Common myeloid progenitor, CD34-positive (primary cell): ENCODE measurements at regions of chr7 and their contacts with region 1.

Region 1: GRCh38 chr7:3154912-3155494 is 111.3 kb upstream of the CARD11 start:
- DNase-seq: peak; percentile 67 to 85 (median 76)
- H3K4me3 ChIP-seq: no peak overlapping the region
- H3K27ac ChIP-seq: no peak overlapping the region
- H3K4me1 ChIP-seq: peaks cover 2 to 23% (median 11%) of the 10 kb centered on the region in 4 experiments
- H3K27me3 ChIP-seq: no peaks in the 10 kb centered on the region

Region 2: GRCh38 chr7:2863461-2864066 is 291.4 kb before region 1 on chr7:
- CTCF ChIA-PET with region 1: interaction called, 35 read pairs
- POLR2A ChIA-PET with region 1: no interaction called
- DNase-seq: peak; percentile 85 to 96 (median 94)
- H3K4me3 ChIP-seq: peak overlapping the region in 4 of 7 experiments; percentile 11 to 60 (median 32)
- H3K27ac ChIP-seq: no peak overlapping the region
- H3K4me1 ChIP-seq: peaks cover 3 to 30% (median 21%) of the 10 kb centered on the region in 4 experiments
- H3K27me3 ChIP-seq: no peaks in the 10 kb centered on the region

Region 3: GRCh38 chr7:2886900-2887299 is 268.1 kb before region 1 on chr7:
- CTCF ChIA-PET with region 1: interaction called, 12 read pairs
- POLR2A ChIA-PET with region 1: no interaction called
- DNase-seq: peak; percentile 81 to 82 (median 82)
- H3K4me3 ChIP-seq: no peak overlapping the region
- H3K27ac ChIP-seq: no peak overlapping the region
- H3K4me1 ChIP-seq: peaks cover 0 to 21% (median 16%) of the 10 kb centered on the region in 4 experiments
- H3K27me3 ChIP-seq: no peaks in the 10 kb centered on the region

Region 4: GRCh38 chr7:3065724-3066143 is 89.3 kb before region 1 on chr7:
- CTCF ChIA-PET with region 1: interaction called, 12 read pairs
- POLR2A ChIA-PET with region 1: no interaction called
- DNase-seq: peak; percentile 44 to 59 (median 54)
- H3K4me3 ChIP-seq: no peak overlapping the region
- H3K27ac ChIP-seq: no peak overlapping the region
- H3K4me1 ChIP-seq: peaks cover 0 to 30% (median 18%) of the 10 kb centered on the region in 4 experiments
- H3K27me3 ChIP-seq: no peaks in the 10 kb centered on the region

Region 5: DNA sequence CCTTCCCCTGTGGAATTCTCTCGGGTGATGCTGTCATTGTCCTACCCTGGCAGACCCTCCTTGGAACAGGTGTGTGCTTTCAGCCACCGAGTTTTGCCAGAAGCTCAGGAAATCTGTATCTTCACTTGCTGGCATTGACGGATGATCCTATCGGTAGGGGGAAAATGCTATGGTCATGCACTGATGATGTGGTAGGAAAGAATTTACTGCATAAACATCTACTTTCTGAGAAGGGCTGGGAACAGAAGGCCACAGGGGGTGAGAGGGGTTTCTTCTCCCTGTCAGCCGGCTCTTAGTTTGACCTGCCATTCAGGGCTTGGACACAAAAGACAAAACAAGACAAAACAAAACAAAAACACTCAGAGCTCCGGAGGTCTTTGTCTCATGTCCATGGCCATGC is 67.8 kb before region 1 on chr7:
- CTCF ChIA-PET with region 1: interaction called, 39 read pairs
- POLR2A ChIA-PET with region 1: no interaction called
- DNase-seq: no peak
- H3K4me3 ChIP-seq: no peak overlapping the region
- H3K27ac ChIP-seq: no peak overlapping the region
- H3K4me1 ChIP-seq: peaks cover 5 to 10% (median 9%) of the 10 kb centered on the region in 4 experiments
- H3K27me3 ChIP-seq: no peaks in the 10 kb centered on the region

Region 6: DNA sequence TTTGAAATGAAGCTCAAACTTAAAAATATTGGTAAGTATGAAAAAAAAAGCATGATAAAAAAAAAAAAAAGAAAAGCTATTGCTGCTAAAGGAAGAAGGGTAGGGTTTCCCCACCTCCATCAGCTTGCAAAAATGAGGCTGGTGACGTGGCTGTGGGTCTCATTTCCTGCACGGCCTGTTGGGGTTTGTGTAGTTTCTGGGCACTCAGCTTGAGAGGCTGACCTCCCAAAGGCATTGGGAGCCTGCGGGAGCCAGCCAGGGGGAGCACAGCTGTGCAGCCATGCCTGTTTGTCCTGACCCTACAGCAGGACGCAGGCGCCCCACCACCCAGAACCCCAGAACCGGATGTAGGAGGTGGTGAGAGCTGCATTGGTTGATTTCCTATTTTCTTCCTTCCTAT is 62.5 kb before region 1 on chr7:
- CTCF ChIA-PET with region 1: interaction called, 39 read pairs
- POLR2A ChIA-PET with region 1: no interaction called
- DNase-seq: peak; percentile 78 to 94 (median 93)
- H3K4me3 ChIP-seq: peak overlapping the region in 1 of 7 experiments; percentile 17
- H3K27ac ChIP-seq: no peak overlapping the region
- H3K4me1 ChIP-seq: peaks cover 12 to 49% (median 41%) of the 10 kb centered on the region in 4 experiments
- H3K27me3 ChIP-seq: no peaks in the 10 kb centered on the region

Region 7: DNA sequence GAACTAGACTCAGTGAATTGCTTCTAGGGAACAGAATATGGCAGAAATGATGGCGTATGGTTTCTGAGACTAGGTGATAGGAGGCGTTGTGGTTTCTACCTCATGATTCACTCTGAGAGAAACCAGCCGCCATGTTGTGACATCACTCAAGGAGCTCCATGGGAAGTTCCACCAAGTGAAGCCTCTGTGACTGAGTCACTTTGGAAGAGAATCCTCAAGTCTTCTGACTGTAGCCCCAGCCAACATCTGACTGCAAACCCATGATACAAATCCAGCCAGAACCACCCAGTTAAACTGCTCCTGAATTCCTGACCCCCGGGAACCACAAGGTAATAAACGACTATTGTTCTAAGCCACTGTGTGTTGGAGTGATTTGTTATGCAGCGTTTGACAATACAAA is 20.3 kb before region 1 on chr7:
- CTCF ChIA-PET with region 1: interaction called, 13 read pairs
- POLR2A ChIA-PET with region 1: interaction called, 6 read pairs
- DNase-seq: peak; percentile 39 to 79 (median 76)
- H3K4me3 ChIP-seq: no peak overlapping the region
- H3K27ac ChIP-seq: no peak overlapping the region
- H3K4me1 ChIP-seq: peaks cover 7 to 26% (median 13%) of the 10 kb centered on the region in 4 experiments
- H3K27me3 ChIP-seq: no peaks in the 10 kb centered on the region

Region 8: GRCh38 chr7:3187444-3188040 is 32.5 kb after region 1 on chr7:
- CTCF ChIA-PET with region 1: no interaction called
- POLR2A ChIA-PET with region 1: no interaction called
- DNase-seq: no peak
- H3K4me3 ChIP-seq: no peak overlapping the region
- H3K27ac ChIP-seq: no peak overlapping the region
- H3K4me1 ChIP-seq: peaks cover 0 to 11% (median 2%) of the 10 kb centered on the region in 4 experiments
- H3K27me3 ChIP-seq: no peaks in the 10 kb centered on the region